Activated naive CD4-positive, alpha-beta T cell treated with anti-CD3 and anti-CD28 coated beads for 36 hours (primary cell): ENCODE measurements at regions of chr1 and their contacts with region 1.

Region 1: GRCh38 chr1:244047621-244048471 is 3.2 kb upstream of the ZBTB18 start:
- DNase-seq: peak; percentile 98
- H3K4me3 Mint-ChIP-seq: peak overlapping the region; percentile 94
- H3K27ac Mint-ChIP-seq: peak overlapping the region; percentile 96
- H3K4me1 Mint-ChIP-seq: peaks cover 45% of the 10 kb centered on the region
- H3K27me3 Mint-ChIP-seq: no peaks in the 10 kb centered on the region

Region 2: DNA sequence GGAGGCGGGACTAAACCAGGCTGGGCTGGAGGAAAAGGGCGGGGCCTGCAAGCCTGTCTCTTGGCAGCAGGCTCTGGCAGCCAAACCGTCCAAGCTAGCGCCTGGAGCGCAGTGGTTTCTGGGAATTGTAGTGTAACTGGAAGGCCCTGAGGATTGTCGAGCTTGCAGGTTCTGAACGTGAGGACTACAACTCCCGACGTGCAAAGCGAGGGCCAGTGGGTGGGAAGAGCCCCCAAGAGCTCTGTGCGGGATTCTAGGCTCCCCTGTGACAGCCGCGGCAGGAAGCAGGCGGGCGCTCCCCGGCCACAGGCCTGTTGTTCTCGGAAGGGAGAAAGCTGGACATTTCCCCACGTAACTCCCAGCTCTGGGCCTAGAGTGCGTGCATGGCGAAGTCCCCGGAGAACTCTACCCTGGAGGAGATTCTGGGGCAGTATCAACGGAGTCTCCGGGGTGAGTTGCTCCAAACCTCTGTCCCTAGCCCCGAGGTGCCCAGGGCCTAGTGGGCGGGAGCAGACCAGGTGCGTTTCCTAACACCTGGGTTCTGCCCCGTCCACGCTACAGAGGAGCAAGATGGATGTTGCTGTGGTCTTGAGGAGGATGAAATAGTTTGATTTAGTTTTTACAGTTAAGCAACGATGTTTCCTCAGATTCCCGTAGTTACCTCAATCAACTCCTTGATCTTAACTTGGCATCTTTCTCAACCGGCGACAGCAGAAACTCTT is 791.9 kb before region 1 on chr1 and contains the start of gene SDCCAG8:
- CTCF ChIA-PET with region 1: no interaction called
- intact Hi-C with region 1: loop called (anchors 1 kb)
- DNase-seq: peak; percentile 97
- H3K4me3 Mint-ChIP-seq: peak within 1 kb of the TSS; percentile 99
- H3K27ac Mint-ChIP-seq: peak within 1 kb of the TSS; percentile 100
- H3K4me1 Mint-ChIP-seq: peaks cover 36% of the 10 kb centered on the region
- H3K27me3 Mint-ChIP-seq: no peaks in the 10 kb centered on the region
- total RNA-seq, gene SDCCAG8: 24.5 to 29.9 TPM

Region 3: GRCh38 chr1:243850452-243851256 is 197.2 kb before region 1 on chr1:
- CTCF ChIA-PET with region 1: no interaction called
- intact Hi-C with region 1: loop called (anchors 1 kb)
- DNase-seq: peak; percentile 86
- H3K4me3 Mint-ChIP-seq: peak overlapping the region; percentile 80
- H3K27ac Mint-ChIP-seq: peak overlapping the region; percentile 81
- H3K4me1 Mint-ChIP-seq: peaks cover 30% of the 10 kb centered on the region
- H3K27me3 Mint-ChIP-seq: peaks cover 7% of the 10 kb centered on the region

Region 4: DNA sequence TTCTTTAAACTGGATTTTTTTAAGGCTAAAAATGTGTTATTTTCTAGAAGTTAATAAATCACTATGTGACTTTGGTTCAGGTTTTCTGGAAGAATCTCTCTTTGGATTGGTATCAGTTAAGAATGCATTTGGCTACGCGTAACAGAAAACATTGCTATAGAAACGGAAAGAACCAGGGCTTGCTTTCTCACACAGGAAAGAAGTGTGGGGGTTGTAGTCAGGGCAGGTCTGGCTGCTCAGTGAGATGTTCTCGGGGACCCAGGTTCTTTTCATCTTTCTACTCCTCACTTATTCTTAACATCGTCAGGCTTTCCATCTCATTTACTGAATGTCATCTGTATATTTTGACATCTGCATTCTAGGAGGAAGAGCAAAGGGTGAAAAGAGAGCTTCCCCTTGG is 194.6 kb after region 1 on chr1:
- CTCF ChIA-PET with region 1: no interaction called
- intact Hi-C with region 1: loop called (anchors 1 kb)
- DNase-seq: peak; percentile 42
- H3K4me3 Mint-ChIP-seq: no peak overlapping the region
- H3K27ac Mint-ChIP-seq: no peak overlapping the region
- H3K4me1 Mint-ChIP-seq: peaks cover 20% of the 10 kb centered on the region
- H3K27me3 Mint-ChIP-seq: no peaks in the 10 kb centered on the region

Region 5: GRCh38 chr1:244291236-244292201 is 243.7 kb after region 1 on chr1:
- CTCF ChIA-PET with region 1: no interaction called
- intact Hi-C with region 1: no loop called
- DNase-seq: no peak
- H3K4me3 Mint-ChIP-seq: no peak overlapping the region
- H3K27ac Mint-ChIP-seq: no peak overlapping the region
- H3K4me1 Mint-ChIP-seq: peaks cover 4% of the 10 kb centered on the region
- H3K27me3 Mint-ChIP-seq: no peaks in the 10 kb centered on the region

Region 6: GRCh38 chr1:244319283-244320132 is 271.7 kb after region 1 on chr1:
- CTCF ChIA-PET with region 1: no interaction called
- intact Hi-C with region 1: loop called (anchors 2 kb)
- DNase-seq: peak; percentile 70
- H3K4me3 Mint-ChIP-seq: no peak overlapping the region
- H3K27ac Mint-ChIP-seq: peak overlapping the region; percentile 14
- H3K4me1 Mint-ChIP-seq: peaks cover 13% of the 10 kb centered on the region
- H3K27me3 Mint-ChIP-seq: no peaks in the 10 kb centered on the region

Region 7: DNA sequence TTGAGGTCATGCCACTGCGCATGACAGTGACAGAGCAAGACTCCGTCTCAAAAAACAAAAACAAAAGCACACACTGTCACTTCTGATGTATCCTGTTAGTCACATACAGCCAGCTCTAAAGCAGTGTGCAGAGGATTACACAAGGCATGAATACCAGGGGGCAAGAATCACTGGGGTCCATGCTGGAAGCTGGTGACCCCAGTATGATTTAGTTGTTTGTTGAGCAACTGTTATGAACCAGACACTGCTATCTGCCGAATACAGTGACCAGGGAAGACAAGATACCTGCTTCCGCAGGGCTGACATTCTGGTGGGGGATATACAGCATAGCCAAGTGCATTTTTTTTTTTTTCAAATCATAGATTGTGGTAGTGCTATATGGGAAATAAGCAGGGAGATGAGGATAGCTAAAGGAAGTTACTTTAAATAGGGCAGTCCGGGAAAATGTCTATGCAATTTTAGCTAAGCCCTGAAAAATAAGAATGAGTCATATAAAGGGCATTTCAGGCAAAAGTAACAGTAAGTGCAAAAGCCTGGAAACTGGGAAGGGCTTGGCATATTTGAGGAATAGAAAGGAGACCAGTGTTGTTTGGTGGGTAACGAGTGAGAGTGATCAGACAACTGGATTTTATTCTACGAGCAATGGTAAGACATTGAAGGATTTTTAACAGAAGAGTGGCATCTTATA is 334.2 kb after region 1 on chr1:
- CTCF ChIA-PET with region 1: no interaction called
- intact Hi-C with region 1: no loop called
- DNase-seq: no peak
- H3K4me3 Mint-ChIP-seq: no peak overlapping the region
- H3K27ac Mint-ChIP-seq: no peak overlapping the region
- H3K4me1 Mint-ChIP-seq: no peaks in the 10 kb centered on the region
- H3K27me3 Mint-ChIP-seq: no peaks in the 10 kb centered on the region

Region 8: DNA sequence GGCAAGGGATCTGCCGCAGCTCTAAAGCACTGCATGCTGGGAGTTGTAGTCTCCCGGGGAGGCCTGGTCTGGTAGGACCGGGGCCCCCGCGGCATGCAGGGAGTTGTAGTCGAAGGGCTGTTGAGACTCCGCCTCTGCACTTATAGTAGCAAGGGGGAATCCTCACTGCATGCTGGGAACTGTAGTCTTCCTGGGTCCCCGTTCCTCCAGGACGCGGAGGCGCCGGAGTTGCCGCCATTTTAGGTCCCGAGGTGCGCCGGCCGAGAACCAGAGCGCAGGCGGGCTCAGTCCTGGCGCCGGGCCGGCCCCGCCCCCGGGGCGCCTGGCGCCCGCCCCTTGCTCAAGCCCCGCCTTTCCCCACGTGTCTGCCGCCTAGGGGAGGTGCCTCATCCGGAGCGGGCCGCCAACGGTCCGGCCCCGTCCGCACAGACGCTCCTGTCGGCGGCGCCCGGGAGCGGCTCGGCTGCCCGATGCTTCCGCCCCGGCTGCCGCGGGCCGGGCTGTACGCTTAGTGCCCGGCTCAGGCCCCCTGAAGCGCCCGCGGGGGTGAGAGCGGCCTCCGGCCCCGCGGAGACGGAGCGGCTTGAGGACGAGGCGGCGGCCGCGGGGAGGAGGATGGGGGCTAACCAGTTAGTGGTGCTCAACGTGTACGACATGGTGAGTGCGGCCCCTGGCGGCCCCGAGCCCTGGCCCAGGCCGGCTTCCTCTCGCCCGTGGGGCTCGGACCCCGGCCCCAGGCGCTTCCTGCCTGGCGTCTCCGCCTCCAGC is 605.0 kb after region 1 on chr1 and contains the start of gene DESI2:
- CTCF ChIA-PET with region 1: no interaction called
- intact Hi-C with region 1: loop called (anchors 2 kb)
- DNase-seq: peak; percentile 99
- H3K4me3 Mint-ChIP-seq: peak within 1 kb of the TSS; percentile 82
- H3K27ac Mint-ChIP-seq: peak within 1 kb of the TSS; percentile 88
- H3K4me1 Mint-ChIP-seq: peaks cover 18% of the 10 kb centered on the region
- H3K27me3 Mint-ChIP-seq: no peaks in the 10 kb centered on the region
- total RNA-seq, gene DESI2: 31.7 to 32.5 TPM

Region 9: GRCh38 chr1:244970661-244971551 is 923.1 kb after region 1 on chr1:
- CTCF ChIA-PET with region 1: interaction called, 3 read pairs
- intact Hi-C with region 1: loop called (anchors 2 kb)
- DNase-seq: peak; percentile 93
- H3K4me3 Mint-ChIP-seq: peak overlapping the region; percentile 93
- H3K27ac Mint-ChIP-seq: peak overlapping the region; percentile 98
- H3K4me1 Mint-ChIP-seq: peaks cover 11% of the 10 kb centered on the region
- H3K27me3 Mint-ChIP-seq: no peaks in the 10 kb centered on the region